A549 (cell line): ENCODE measurements at regions of chr9 and their contacts with region 1.

Region 1: GRCh38 chr9:133238851-133239532 is 29.9 kb upstream of the OBP2B start:
- DNase-seq: peak; percentile 93 to 96
- ATAC-seq: peak; percentile 85 to 92
- H3K4me3 ChIP-seq: peak overlapping the region; percentile 40
- H3K27ac ChIP-seq: peak overlapping the region; percentile 59 to 87
- H3K4me1 ChIP-seq: peaks cover 5% of the 10 kb centered on the region; the same call in 1 of the 3 replicates
- CTCF ChIP-seq: peak; percentile 97
- EP300 ChIP-seq: no peak
- POLR2A ChIP-seq: no peak; the same call in 1 of the 2 replicates
- RAD21 ChIP-seq: peak; percentile 60 to 64; a peak in 4 of 5 replicates

Region 2: GRCh38 chr9:133149126-133150107 is 89.6 kb before region 1 on chr9:
- CTCF ChIA-PET with region 1: interaction called, 12 read pairs
- POLR2A ChIA-PET with region 1: no interaction called
- DNase-seq: peak; percentile 93 to 96
- ATAC-seq: peak; percentile 71 to 76
- H3K4me3 ChIP-seq: peak overlapping the region; percentile 77
- H3K27ac ChIP-seq: peak overlapping the region; percentile 88 to 96
- H3K4me1 ChIP-seq: peaks cover 25% of the 10 kb centered on the region
- CTCF ChIP-seq: peak; percentile 23; the same call in 2 of the 3 replicates
- EP300 ChIP-seq: no peak
- POLR2A ChIP-seq: peak; percentile 52
- RAD21 ChIP-seq: peak in 1 of 2 experiments; percentile 41; a peak in 3 of 5 replicates

Region 3: DNA sequence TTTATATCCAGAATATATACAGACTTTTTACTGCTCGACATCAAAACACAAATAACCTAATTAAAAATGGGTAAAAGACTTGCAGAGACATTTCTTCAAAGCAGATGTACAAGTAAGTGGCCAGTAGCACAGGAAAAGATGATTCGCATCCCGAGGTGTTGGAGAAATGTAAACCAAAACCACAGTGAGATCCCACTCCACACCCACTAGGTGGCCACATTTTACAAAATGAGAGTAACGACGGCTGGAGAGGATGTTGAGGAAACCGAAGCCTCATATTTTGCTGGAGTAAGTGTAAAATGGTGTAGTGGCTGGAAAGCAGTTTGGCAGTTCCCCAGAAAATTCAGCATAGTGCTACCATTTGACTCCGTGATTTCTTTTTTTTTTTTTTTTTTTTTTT is 54.0 kb before region 1 on chr9:
- CTCF ChIA-PET with region 1: interaction called, 66 read pairs
- POLR2A ChIA-PET with region 1: interaction called, 4 read pairs
- DNase-seq: peak; percentile 71 to 76
- ATAC-seq: peak; percentile 75 to 82
- H3K4me3 ChIP-seq: no peak overlapping the region
- H3K27ac ChIP-seq: no peak overlapping the region
- H3K4me1 ChIP-seq: 0 out of 3 replicates have a peak, but pooled peaks cover 3% of the 10 kb centered on the region
- CTCF ChIP-seq: peak; percentile 58
- EP300 ChIP-seq: no peak
- POLR2A ChIP-seq: no peak
- RAD21 ChIP-seq: peak; percentile 64 to 72

Region 4: GRCh38 chr9:133250741-133251170 is 11.8 kb after region 1 on chr9:
- CTCF ChIA-PET with region 1: interaction called, 24 read pairs
- POLR2A ChIA-PET with region 1: no interaction called
- DNase-seq: no peak
- ATAC-seq: no peak
- H3K4me3 ChIP-seq: no peak overlapping the region
- H3K27ac ChIP-seq: no peak overlapping the region
- H3K4me1 ChIP-seq: no peaks in the 10 kb centered on the region
- CTCF ChIP-seq: no peak
- EP300 ChIP-seq: no peak
- POLR2A ChIP-seq: no peak
- RAD21 ChIP-seq: no peak

Region 5: DNA sequence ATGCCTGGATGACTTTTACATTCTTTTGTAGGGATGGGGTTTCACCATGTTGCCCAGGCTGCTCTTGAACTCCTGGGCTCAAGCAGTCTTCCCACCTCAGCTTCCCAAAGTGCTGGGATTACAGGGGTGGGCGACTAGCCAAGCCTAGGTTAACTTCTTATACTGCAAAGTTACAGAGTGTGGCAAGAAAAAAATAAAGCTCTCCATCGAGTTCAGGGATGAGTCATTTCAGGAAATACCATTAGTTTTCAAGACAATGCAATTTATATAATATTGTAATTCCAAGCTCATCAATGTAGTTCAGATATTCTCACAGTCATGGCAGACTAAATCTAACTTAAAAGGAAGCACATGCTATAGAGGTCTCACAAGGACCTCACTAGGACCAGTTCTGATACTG is 47.5 kb after region 1 on chr9:
- CTCF ChIA-PET with region 1: interaction called, 22 read pairs
- POLR2A ChIA-PET with region 1: no interaction called
- DNase-seq: no peak
- ATAC-seq: no peak
- H3K4me3 ChIP-seq: no peak overlapping the region
- H3K27ac ChIP-seq: no peak overlapping the region
- H3K4me1 ChIP-seq: no peaks in the 10 kb centered on the region
- CTCF ChIP-seq: no peak
- EP300 ChIP-seq: no peak
- POLR2A ChIP-seq: no peak
- RAD21 ChIP-seq: no peak

Region 6: DNA sequence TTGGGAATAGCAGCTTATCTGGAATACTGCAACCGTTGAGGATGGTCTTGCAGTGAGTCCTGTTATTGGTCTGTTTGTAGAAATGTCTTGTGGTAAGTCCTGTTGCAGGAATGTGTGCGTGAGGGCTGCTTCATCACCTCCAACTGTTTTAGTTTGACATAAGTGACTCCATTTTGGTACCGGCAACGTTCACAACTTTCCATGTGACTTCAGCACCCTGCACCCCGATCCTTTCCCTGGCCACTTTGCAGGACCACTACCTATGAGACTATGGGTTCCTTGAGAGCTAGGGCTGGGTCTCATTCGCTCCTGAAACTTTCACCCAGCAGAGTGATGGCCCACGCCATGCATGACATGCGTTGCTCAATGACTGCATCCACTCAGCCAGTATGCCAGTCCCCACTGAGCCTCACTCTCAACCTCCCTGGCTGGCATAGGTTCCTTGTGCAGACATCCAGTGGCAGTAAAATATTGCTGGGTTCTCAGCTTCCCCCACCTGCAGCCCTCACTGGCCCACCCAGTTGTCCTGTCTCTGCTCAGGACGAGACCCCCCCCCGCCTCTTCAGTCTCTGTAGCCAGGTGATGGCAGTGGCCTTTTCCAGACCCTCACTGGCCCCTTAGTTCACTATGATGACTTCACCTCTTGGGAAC is 89.0 kb after region 1 on chr9:
- CTCF ChIA-PET with region 1: interaction called, 44 read pairs
- POLR2A ChIA-PET with region 1: interaction called, 4 read pairs
- DNase-seq: no peak
- ATAC-seq: peak in 1 of 2 experiments; percentile 17; a peak in 2 of 6 replicates
- H3K4me3 ChIP-seq: no peak overlapping the region
- H3K27ac ChIP-seq: no peak overlapping the region
- H3K4me1 ChIP-seq: no peaks in the 10 kb centered on the region
- CTCF ChIP-seq: no peak
- EP300 ChIP-seq: no peak
- POLR2A ChIP-seq: no peak
- RAD21 ChIP-seq: no peak

Region 7: DNA sequence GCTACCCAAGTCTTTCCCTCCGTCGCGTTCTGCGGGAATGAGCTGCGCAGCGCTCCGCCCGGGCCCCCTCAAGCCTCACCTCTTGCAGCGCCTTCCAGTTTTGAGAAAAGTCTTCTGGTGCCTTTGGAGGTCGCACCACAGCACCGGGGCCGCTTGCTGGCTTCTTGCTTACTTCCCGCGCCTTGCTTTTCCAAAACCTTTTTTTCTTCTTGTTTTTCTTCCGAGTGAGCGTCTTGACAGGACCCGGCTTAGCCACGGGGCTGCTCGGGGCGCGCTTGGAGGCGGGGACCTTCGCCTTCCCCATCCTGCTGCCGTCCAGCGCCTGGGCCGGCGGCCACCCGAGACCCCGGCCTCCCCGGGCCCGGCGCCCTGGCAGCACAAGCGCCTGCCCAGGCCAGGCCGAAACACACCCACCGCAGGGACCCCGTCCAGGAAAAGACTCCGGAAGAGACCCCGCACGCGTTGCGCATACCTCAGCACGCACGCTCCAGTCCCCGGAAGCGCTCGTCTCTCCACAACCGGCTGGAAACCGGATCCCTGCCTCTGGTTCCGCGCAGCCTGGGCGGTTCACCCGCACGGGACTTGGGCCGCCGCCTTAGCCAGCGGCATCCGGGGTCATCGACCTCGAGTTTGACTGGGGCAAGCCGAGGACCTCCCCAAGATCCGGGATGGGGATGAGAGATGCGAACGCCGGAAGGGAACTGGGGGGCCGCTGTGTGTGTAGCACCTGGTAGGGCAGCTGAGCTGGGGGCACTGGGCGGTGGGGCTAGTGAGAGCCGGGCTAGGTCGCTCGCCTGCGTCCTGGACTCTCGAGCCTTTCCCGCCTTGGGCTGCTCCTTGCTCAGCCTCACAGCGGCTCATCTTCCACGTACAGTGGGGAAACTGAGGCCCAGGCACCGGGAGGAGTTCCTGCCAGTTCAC is 178.8 kb after region 1 on chr9 and contains the start of gene REXO4:
- CTCF ChIA-PET with region 1: no interaction called
- POLR2A ChIA-PET with region 1: no interaction called
- DNase-seq: peak; percentile 73 to 89
- ATAC-seq: peak; percentile 89 to 96
- H3K4me3 ChIP-seq: peak within 1 kb of the TSS; percentile 98
- H3K27ac ChIP-seq: peak within 1 kb of the TSS; percentile 92 to 93
- H3K4me1 ChIP-seq: peaks cover 14% of the 10 kb centered on the region; the same call in 1 of the 3 replicates
- CTCF ChIP-seq: no peak
- EP300 ChIP-seq: no peak
- POLR2A ChIP-seq: peak; percentile 40; the same call in 1 of the 2 replicates
- RAD21 ChIP-seq: no peak
- polyA plus RNA-seq, gene REXO4: 20.6 and 25.8 TPM in 2 replicates